ENCODE measurements at regions of chr6 and their contacts with region 1.

Region 1: GRCh38 chr6:152636609-152637295 is 410 bp downstream of the SYNE1 start:
- DNase-seq: peak; percentile 44 to 56
- H3K4me3 ChIP-seq: peak overlapping the region; percentile 34 to 68
- H3K27ac ChIP-seq: peak overlapping the region; percentile 61 to 76
- H3K4me1 ChIP-seq: no peaks in the 10 kb centered on the region
- H3K27me3 ChIP-seq: no peaks in the 10 kb centered on the region
- CTCF ChIP-seq: no peak
- POLR2A ChIP-seq: no peak

Region 2: GRCh38 chr6:152552616-152553209 is 84.0 kb before region 1 on chr6:
- intact Hi-C with region 1: loop called (anchors 10 kb)
- DNase-seq: peak; percentile 71 to 80
- H3K4me3 ChIP-seq: no peak overlapping the region
- H3K27ac ChIP-seq: no peak overlapping the region
- H3K4me1 ChIP-seq: no peaks in the 10 kb centered on the region
- H3K27me3 ChIP-seq: no peaks in the 10 kb centered on the region
- CTCF ChIP-seq: peak; percentile 86 to 91 (median 90)
- POLR2A ChIP-seq: no peak

Region 3: GRCh38 chr6:153092082-153093013 is 455.6 kb after region 1 on chr6:
- intact Hi-C with region 1: no loop called
- DNase-seq: no peak
- H3K4me3 ChIP-seq: no peak overlapping the region
- H3K27ac ChIP-seq: no peak overlapping the region
- H3K4me1 ChIP-seq: no peaks in the 10 kb centered on the region
- H3K27me3 ChIP-seq: no peaks in the 10 kb centered on the region
- CTCF ChIP-seq: no peak
- POLR2A ChIP-seq: no peak